GM10248 (cell line): ENCODE measurements at regions of chr12 and their contacts with region 1.

Region 1: GRCh38 chr12:31406345-31406744 is 80.4 kb upstream of the SINHCAF start:
- DNase-seq: peak; percentile 68
- CTCF ChIP-seq: no peak

Region 2: DNA sequence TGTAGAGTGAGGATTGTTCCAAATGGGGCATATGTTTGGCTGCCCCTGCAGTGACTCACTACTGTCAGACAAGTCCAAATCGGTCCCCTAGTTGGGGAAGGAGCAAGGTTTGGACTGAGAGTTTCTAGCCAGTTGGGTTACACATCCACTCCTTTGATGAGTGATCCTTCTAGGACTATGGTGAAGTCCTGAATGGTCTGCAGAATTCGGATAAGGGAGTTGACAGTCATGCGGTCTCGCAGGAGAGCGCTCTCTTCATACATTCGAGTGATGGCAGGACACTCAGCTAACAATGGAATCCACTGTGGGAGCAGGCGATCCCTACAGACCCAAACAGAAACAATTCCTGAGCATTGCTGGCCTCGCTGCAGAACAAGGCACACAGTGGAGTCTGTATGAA is 18.9 kb before region 1 on chr12:
- CTCF ChIA-PET with region 1: interaction called, 14 read pairs
- POLR2A ChIA-PET with region 1: no interaction called
- DNase-seq: no peak
- CTCF ChIP-seq: no peak

Region 3: GRCh38 chr12:31629756-31630732 is 223.7 kb after region 1 on chr12:
- CTCF ChIA-PET with region 1: interaction called, 30 read pairs
- POLR2A ChIA-PET with region 1: no interaction called
- DNase-seq: no peak
- CTCF ChIP-seq: no peak

Region 4: DNA sequence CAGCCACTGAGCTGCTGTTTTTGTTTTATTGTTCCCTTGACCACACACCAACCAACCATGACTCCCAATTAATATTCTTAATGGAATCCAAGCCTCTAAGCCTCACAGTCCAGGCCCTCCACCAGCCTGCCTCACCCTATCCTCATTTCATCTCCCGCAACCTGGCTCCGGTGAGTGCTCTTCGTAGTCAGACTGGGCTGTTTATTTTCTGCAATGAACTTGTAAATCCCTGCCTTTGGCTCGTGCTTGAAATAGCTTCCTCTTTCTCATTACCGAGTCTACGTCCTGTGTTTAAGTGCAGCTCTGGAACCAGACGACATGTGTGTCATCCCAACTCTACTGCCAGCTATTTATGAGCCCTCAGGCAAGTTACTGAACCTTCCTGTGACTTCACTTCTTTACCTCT is 240.7 kb after region 1 on chr12:
- CTCF ChIA-PET with region 1: interaction called, 30 read pairs
- POLR2A ChIA-PET with region 1: no interaction called
- DNase-seq: no peak
- CTCF ChIP-seq: no peak